Activated B cell treated with CpG ODN at 0.5 μM for 24 hours (primary cell): ENCODE measurements at regions of chr2 and their contacts with region 1.

Region 1: DNA sequence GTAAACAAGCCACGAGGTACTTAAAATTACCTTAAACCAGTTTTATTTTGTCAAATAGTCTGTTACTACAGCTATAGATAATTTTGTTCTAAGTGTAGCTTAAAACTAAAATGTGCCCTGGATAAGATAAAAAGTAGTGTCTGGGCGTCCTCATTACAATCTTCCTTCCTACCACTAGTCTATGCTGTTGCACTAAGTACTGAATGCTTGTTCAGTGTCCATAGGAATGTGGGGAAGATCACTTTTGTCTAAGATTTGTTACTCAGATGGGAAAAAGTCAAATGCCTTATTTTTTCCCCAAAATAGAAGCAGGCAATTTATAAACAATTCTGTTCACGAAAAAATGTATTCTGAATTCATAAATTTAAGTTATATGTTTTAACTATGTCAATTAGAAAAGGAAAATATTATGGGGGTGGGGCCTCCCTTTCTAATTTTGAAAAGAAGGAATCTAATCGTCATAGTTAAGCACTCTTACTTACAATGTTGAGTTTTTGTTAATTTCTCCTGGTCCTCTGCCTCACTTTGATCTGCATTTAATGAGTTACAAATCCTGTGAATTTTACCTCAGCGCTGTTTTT is 140.4 kb upstream of the VRK2 start:
- DNase-seq: no peak
- ATAC-seq: peak; percentile 58
- H3K4me3 Mint-ChIP-seq: no peak overlapping the region
- H3K27ac Mint-ChIP-seq: peak overlapping the region; percentile 4
- H3K4me1 Mint-ChIP-seq: peaks cover 34% of the 10 kb centered on the region
- H3K27me3 Mint-ChIP-seq: no peaks in the 10 kb centered on the region
- CTCF ChIP-seq: peak; percentile 42

Region 2: GRCh38 chr2:57890464-57890863 is 15.8 kb before region 1 on chr2:
- CTCF ChIA-PET with region 1: interaction called, 12 read pairs
- POLR2A ChIA-PET with region 1: no interaction called
- intact Hi-C with region 1: no loop called
- DNase-seq: no peak
- ATAC-seq: no peak
- H3K4me3 Mint-ChIP-seq: no peak overlapping the region
- H3K27ac Mint-ChIP-seq: no peak overlapping the region
- H3K4me1 Mint-ChIP-seq: peaks cover 16% of the 10 kb centered on the region
- H3K27me3 Mint-ChIP-seq: no peaks in the 10 kb centered on the region
- CTCF ChIP-seq: no peak

Region 3: GRCh38 chr2:57947398-57947797 is 41.2 kb after region 1 on chr2:
- CTCF ChIA-PET with region 1: no interaction called
- POLR2A ChIA-PET with region 1: no interaction called
- intact Hi-C with region 1: no loop called
- DNase-seq: no peak
- ATAC-seq: no peak
- H3K4me3 Mint-ChIP-seq: no peak overlapping the region
- H3K27ac Mint-ChIP-seq: no peak overlapping the region
- H3K4me1 Mint-ChIP-seq: no peaks in the 10 kb centered on the region
- H3K27me3 Mint-ChIP-seq: no peaks in the 10 kb centered on the region
- CTCF ChIP-seq: no peak

Region 4: GRCh38 chr2:58131191-58132011 is 225.2 kb after region 1 on chr2:
- CTCF ChIA-PET with region 1: interaction called, 3 read pairs
- POLR2A ChIA-PET with region 1: no interaction called
- intact Hi-C with region 1: loop called (anchors 5 kb)
- DNase-seq: no peak
- ATAC-seq: no peak
- H3K4me3 Mint-ChIP-seq: no peak overlapping the region
- H3K27ac Mint-ChIP-seq: no peak overlapping the region
- H3K4me1 Mint-ChIP-seq: no peaks in the 10 kb centered on the region
- H3K27me3 Mint-ChIP-seq: no peaks in the 10 kb centered on the region
- CTCF ChIP-seq: no peak

Region 5: DNA sequence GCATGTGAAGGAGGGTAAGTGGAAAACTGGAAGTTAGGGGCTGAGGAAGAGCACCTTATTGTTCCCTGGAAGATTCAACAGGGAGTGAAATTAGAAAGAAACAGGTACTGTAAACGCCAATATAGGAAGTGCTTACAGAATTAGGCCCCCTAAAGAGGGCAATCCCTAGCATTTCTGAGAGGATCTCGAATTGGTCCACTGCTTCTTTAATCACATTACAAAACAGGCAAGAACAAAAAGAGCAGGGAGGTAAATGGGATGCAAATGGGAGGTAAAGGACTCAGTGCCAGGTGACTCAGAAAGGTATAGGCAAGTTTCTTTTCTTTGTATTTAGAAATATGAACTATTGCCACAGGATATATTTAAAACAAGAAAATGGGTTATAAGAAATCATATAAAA is 451.3 kb after region 1 on chr2:
- CTCF ChIA-PET with region 1: no interaction called
- POLR2A ChIA-PET with region 1: no interaction called
- intact Hi-C with region 1: loop called (anchors 5 kb)
- DNase-seq: no peak
- ATAC-seq: no peak
- H3K4me3 Mint-ChIP-seq: no peak overlapping the region
- H3K27ac Mint-ChIP-seq: no peak overlapping the region
- H3K4me1 Mint-ChIP-seq: no peaks in the 10 kb centered on the region
- H3K27me3 Mint-ChIP-seq: no peaks in the 10 kb centered on the region
- CTCF ChIP-seq: no peak

Region 6: GRCh38 chr2:58571181-58571852 is 665.1 kb after region 1 on chr2:
- CTCF ChIA-PET with region 1: interaction called, 3 read pairs
- POLR2A ChIA-PET with region 1: no interaction called
- intact Hi-C with region 1: loop called (anchors 2 kb)
- DNase-seq: no peak
- ATAC-seq: peak; percentile 61
- H3K4me3 Mint-ChIP-seq: no peak overlapping the region
- H3K27ac Mint-ChIP-seq: no peak overlapping the region
- H3K4me1 Mint-ChIP-seq: peaks cover 12% of the 10 kb centered on the region
- H3K27me3 Mint-ChIP-seq: no peaks in the 10 kb centered on the region
- CTCF ChIP-seq: no peak

Region 7: DNA sequence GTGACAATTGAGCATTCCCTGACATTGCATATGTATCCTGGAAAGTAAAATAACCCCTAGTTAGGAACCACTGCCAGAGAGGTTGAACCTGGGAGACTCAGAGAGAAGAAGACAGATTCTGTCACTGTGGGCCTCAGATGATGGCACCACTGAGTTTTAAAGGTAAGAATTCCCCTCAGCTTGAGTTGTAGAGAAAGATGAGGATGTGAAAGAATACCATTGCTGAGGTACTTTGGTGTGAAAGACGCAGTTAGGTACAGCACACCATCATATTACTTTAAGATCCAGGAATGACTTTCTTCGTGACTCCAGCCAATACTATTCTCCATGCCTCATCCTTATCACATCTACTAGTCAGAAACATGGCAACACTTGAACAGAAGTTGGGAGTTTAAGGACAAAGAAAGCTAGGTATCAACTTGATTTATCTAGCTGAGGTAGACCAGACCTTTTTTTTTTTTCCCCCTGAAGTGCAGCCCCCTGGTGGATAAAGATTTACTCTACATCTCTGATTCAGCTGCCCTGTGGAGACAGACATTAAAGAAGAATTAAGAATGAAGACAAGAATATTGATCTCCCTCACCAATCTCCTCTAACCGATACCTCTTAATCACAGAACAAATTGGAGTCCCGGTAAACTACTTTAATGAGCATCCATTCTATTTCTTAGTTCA is 965.4 kb after region 1 on chr2:
- CTCF ChIA-PET with region 1: interaction called, 3 read pairs
- POLR2A ChIA-PET with region 1: no interaction called
- intact Hi-C with region 1: loop called (anchors 1 kb)
- DNase-seq: no peak
- ATAC-seq: no peak
- H3K4me3 Mint-ChIP-seq: no peak overlapping the region
- H3K27ac Mint-ChIP-seq: no peak overlapping the region
- H3K4me1 Mint-ChIP-seq: no peaks in the 10 kb centered on the region
- H3K27me3 Mint-ChIP-seq: peaks cover 4% of the 10 kb centered on the region
- CTCF ChIP-seq: no peak